ENCODE measurements at regions of chr13 and their contacts with region 1.

Region 1: DNA sequence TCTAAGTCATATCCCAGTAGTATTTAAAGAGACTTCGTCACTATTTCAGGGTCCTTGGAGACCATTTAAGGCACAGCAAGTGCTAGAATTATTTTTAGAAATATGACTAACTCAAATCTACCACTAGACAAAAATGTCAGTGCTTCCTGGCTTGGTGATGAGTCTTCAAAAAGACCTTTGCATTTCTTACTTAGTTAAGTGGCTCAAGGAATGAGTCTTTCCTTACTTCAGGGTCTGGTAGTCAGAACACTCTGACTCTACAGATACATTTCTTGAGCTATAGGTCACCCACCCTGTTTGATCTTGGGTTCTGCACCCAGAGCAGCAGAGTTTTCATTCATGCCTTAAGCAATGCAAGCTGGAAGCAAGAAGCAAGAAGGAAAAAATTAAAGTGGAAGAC is 191.0 kb upstream of the HTR2A start:
- DNase-seq: no peak
- ATAC-seq: no peak
- H3K4me3 ChIP-seq: no peak overlapping the region
- H3K27ac ChIP-seq: no peak overlapping the region
- H3K4me1 ChIP-seq: peaks cover 0 to 3% of the 10 kb centered on the region in 2 donors
- H3K27me3 ChIP-seq: no peaks in the 10 kb centered on the region

Region 2: DNA sequence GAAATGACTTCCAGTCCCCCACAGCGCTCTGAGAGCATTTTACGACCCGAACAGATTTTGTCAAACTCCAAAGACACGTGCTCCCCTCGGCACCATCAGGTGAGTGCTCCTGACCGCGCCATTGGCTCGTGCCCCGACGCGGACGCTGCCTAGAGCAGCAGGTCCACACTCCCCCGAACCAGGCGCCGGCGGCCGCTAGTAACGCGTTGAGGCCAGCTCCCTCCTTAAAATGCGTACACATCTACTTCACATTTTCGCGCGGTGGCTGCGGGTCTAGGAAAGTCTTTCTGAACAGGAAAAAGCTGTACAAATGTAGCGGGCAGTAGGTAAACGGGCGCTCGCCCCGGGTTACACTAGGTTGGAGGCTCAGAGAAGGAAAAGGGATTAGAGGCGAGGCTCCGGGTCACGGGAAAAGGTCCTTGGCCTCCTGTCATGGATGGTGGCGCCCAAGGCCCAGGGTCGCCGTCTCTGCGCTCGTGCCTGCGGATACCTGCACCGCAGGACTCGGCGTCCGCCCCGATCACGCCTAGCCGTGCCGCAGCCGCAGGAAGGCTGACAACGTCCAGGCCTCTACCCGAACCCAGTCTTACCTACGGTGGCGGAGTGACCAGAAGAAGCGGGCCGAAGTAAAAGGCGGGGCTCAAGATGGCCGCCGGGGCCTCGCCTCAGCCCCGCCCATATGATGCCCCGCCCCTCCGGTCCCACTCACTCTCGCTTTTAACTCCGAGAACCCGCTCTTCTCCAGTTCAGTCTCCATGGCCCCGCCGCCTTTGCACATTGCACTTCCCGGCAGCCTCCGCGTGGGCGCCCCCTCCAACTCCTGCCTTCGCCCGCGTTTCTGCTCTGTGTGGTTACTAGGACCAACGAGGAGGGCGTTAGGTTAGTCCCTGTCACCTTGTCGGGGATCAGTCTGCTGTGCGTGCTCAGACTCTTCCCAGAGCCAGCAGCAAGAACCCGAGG is 291.0 kb before region 1 on chr13 and contains the start of gene ESD:
- intact Hi-C with region 1: loop called in 1 of 2 experiments (anchors 10 kb)
- DNase-seq: peak; percentile 97 to 99
- ATAC-seq: peak; percentile 99
- H3K4me3 ChIP-seq: peak within 1 kb of the TSS; percentile 54 to 57
- H3K27ac ChIP-seq: peak within 1 kb of the TSS; percentile 46 to 96
- H3K4me1 ChIP-seq: no peaks in the 10 kb centered on the region
- H3K27me3 ChIP-seq: no peaks in the 10 kb centered on the region
- total RNA-seq, gene ESD: 113 to 127 TPM

Region 3: GRCh38 chr13:46983881-46984280 is 104.0 kb before region 1 on chr13:
- intact Hi-C with region 1: loop called in 1 of 2 experiments (anchors 10 kb)
- DNase-seq: no peak
- ATAC-seq: no peak
- H3K4me3 ChIP-seq: no peak overlapping the region
- H3K27ac ChIP-seq: no peak overlapping the region
- H3K4me1 ChIP-seq: peaks cover 0 to 4% of the 10 kb centered on the region in 2 donors
- H3K27me3 ChIP-seq: no peaks in the 10 kb centered on the region

Region 4: GRCh38 chr13:47287291-47287751 is 199.5 kb after region 1 on chr13:
- intact Hi-C with region 1: no loop called
- DNase-seq: no peak
- ATAC-seq: no peak
- H3K4me3 ChIP-seq: no peak overlapping the region
- H3K27ac ChIP-seq: no peak overlapping the region
- H3K4me1 ChIP-seq: no peaks in the 10 kb centered on the region
- H3K27me3 ChIP-seq: peaks cover 0 to 2% of the 10 kb centered on the region in 2 donors

Region 5: DNA sequence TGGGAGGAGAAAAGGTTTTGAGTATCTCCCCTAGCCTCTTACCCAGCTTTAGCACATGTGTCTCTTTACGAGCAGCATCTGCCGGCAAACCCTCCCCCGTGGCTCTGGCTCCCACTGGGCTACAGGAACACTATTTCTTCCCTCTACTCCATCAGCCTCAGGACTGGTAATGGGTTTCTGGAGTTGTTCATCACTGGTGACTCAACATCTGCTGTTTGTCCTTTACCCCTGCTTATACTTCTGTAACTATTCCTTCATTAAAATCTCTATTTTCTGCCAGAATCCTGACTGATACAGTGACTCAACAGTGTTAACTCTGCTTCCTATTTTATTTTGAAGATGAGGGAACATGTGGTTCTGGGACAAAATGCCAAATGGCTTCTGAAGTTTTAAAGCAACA is 246.3 kb after region 1 on chr13:
- intact Hi-C with region 1: loop called in 1 of 2 experiments (anchors 10 kb)
- DNase-seq: no peak
- ATAC-seq: peak; percentile 39
- H3K4me3 ChIP-seq: no peak overlapping the region
- H3K27ac ChIP-seq: no peak overlapping the region
- H3K4me1 ChIP-seq: peaks cover 2% of the 10 kb centered on the region in 2 donors
- H3K27me3 ChIP-seq: no peaks in the 10 kb centered on the region